ENCODE measurements at regions of chr18 and their contacts with region 1.

Region 1: GRCh38 chr18:50967714-50968661 is at the start of gene ELAC1:
- DNase-seq: peak; percentile 83 to 91
- ATAC-seq: peak; percentile 98
- H3K4me3 ChIP-seq: peak within 1 kb of the TSS; percentile 79 to 94
- H3K27ac ChIP-seq: peak within 1 kb of the TSS; percentile 85 to 99
- H3K4me1 ChIP-seq: peaks cover 0 to 7% of the 10 kb centered on the region in 2 donors
- H3K27me3 ChIP-seq: no peaks in the 10 kb centered on the region
- total RNA-seq, gene ELAC1: 5.1 to 7.3 TPM

Region 2: GRCh38 chr18:50878345-50879301 is 89.4 kb before region 1 on chr18 and contains the start of gene ME2:
- intact Hi-C with region 1: loop called in 1 of 2 experiments (anchors 1 kb)
- DNase-seq: peak; percentile 95 to 97
- ATAC-seq: peak; percentile 100
- H3K4me3 ChIP-seq: peak within 1 kb of the TSS; percentile 87 to 88
- H3K27ac ChIP-seq: peak within 1 kb of the TSS; percentile 33 to 72
- H3K4me1 ChIP-seq: peaks cover 2 to 5% of the 10 kb centered on the region in 2 donors
- H3K27me3 ChIP-seq: no peaks in the 10 kb centered on the region
- total RNA-seq, gene ME2: 35.2 TPM

Region 3: DNA sequence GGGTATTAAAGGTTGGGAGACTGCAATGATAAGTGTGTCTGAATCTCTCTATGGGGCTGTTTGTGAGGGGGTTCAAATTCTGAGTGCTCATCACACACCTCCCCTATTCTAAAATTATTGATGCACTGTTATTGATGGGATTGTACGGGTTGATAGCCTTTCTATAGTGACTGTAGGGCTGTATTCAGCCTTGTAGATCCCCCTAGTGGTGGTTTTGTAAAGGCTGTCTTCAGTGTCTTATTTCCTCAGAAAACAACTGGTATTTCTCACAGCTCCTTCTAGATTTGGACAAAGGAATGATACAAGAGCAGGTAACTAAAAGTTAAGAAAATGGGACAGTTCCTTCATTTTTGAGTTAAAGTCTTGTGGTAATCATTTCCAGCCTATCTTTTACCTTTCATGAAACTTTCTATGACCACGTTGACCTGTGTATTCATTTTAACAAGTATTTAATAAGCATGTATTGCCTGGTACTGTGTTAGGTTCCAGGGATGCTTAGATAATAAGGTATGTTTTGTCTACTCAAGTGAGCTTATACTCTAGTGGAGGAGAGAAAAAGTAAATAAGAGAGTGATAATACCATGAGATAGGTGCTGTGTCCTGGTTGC is 83.2 kb after region 1 on chr18:
- intact Hi-C with region 1: loop called in 1 of 2 experiments (anchors 5 kb)
- DNase-seq: no peak
- ATAC-seq: peak; percentile 73
- H3K4me3 ChIP-seq: no peak overlapping the region
- H3K27ac ChIP-seq: no peak overlapping the region
- H3K4me1 ChIP-seq: no peaks in the 10 kb centered on the region
- H3K27me3 ChIP-seq: no peaks in the 10 kb centered on the region

Region 4: GRCh38 chr18:51211552-51211951 is 243.6 kb after region 1 on chr18:
- intact Hi-C with region 1: no loop called
- DNase-seq: peak in 1 of 2 donors; percentile 66
- ATAC-seq: no peak
- H3K4me3 ChIP-seq: no peak overlapping the region
- H3K27ac ChIP-seq: no peak overlapping the region
- H3K4me1 ChIP-seq: no peaks in the 10 kb centered on the region
- H3K27me3 ChIP-seq: no peaks in the 10 kb centered on the region